ENCODE measurements at regions of chr6 and their contacts with region 1.

Region 1: GRCh38 chr6:116139917-116140316 is 14.0 kb upstream of the COL10A1 start:
- DNase-seq: no peak
- ATAC-seq: no peak
- H3K4me3 ChIP-seq: no peak overlapping the region
- H3K4me3 Mint-ChIP-seq: no peak overlapping the region
- H3K27ac ChIP-seq: no peak overlapping the region
- H3K27ac Mint-ChIP-seq: no peak overlapping the region
- H3K4me1 ChIP-seq: no peaks in the 10 kb centered on the region
- H3K4me1 Mint-ChIP-seq: peaks cover 14% of the 10 kb centered on the region
- H3K27me3 ChIP-seq: no peaks in the 10 kb centered on the region
- H3K27me3 Mint-ChIP-seq: no peaks in the 10 kb centered on the region
- CTCF ChIP-seq: no peak

Region 2: GRCh38 chr6:115896538-115897129 is 243.3 kb before region 1 on chr6:
- CTCF ChIA-PET with region 1: no interaction called
- POLR2A ChIA-PET with region 1: no interaction called
- intact Hi-C with region 1: no loop called
- DNase-seq: peak in 2 of 9 experiments; percentile 2
- ATAC-seq: no peak
- H3K4me3 ChIP-seq: no peak overlapping the region
- H3K4me3 Mint-ChIP-seq: no peak overlapping the region
- H3K27ac ChIP-seq: no peak overlapping the region
- H3K27ac Mint-ChIP-seq: no peak overlapping the region
- H3K4me1 ChIP-seq: no peaks in the 10 kb centered on the region
- H3K4me1 Mint-ChIP-seq: no peaks in the 10 kb centered on the region
- H3K27me3 ChIP-seq: no peaks in the 10 kb centered on the region
- H3K27me3 Mint-ChIP-seq: peaks cover 2% of the 10 kb centered on the region
- CTCF ChIP-seq: no peak

Region 3: GRCh38 chr6:116154887-116155286 is 15.0 kb after region 1 on chr6:
- CTCF ChIA-PET with region 1: no interaction called
- POLR2A ChIA-PET with region 1: no interaction called
- intact Hi-C with region 1: loop called in 1 of 2 experiments (anchors 2 kb)
- DNase-seq: no peak
- ATAC-seq: no peak
- H3K4me3 ChIP-seq: no peak overlapping the region
- H3K4me3 Mint-ChIP-seq: no peak overlapping the region
- H3K27ac ChIP-seq: no peak overlapping the region
- H3K27ac Mint-ChIP-seq: no peak overlapping the region
- H3K4me1 ChIP-seq: no peaks in the 10 kb centered on the region
- H3K4me1 Mint-ChIP-seq: peaks cover 18% of the 10 kb centered on the region
- H3K27me3 ChIP-seq: no peaks in the 10 kb centered on the region
- H3K27me3 Mint-ChIP-seq: no peaks in the 10 kb centered on the region
- CTCF ChIP-seq: no peak